Posterior cingulate gyrus (tissue), 11 donors: ENCODE measurements at regions of chr1 and their contacts with region 1.

Region 1: DNA sequence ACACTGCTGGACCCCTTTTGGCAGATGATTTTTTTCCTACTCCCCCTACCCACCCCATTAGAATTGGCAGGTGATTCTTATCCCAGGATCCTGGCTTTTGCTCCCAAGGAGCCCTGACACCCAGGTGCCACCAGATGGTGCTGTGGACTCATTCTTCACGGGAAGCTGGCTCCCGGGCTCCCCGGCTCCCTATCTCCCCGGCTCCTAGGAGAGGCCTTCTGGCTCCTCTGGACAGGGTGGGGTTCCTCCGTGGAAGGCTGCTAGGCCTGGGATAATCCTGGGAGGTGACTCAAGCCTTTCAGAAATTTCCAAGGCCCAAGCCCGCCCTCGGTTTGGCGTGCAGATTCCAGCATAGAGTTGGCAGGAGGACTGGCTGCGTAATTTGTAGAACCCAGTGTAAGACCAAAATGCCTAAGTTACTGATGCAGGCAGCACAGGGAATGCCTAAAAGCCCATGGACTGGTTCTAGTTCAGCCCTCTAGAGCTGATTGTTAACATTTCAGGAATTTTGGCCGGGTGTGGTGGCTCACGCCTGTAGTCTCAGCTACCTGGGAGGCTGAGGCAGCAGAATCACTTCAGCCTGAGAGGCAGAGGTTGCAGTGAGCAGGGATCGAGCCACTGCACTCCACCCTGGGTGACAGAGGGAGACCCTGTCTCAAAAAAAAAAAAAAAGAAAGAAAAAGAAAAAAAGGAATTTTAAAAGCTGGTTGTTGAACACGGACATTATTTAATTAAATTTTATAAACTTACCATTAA is 6.8 kb upstream of the BSDC1 start:
- DNase-seq: peak; percentile 73 to 98 (median 86)

Region 2: GRCh38 chr1:32250893-32251716 is 149.9 kb before region 1 on chr1 and contains the start of gene LCK:
- intact Hi-C with region 1: no loop called
- DNase-seq: no peak

Region 3: GRCh38 chr1:32361674-32362473 is 39.2 kb before region 1 on chr1:
- intact Hi-C with region 1: no loop called
- DNase-seq: peak; percentile 53 to 96 (median 74)

Region 4: DNA sequence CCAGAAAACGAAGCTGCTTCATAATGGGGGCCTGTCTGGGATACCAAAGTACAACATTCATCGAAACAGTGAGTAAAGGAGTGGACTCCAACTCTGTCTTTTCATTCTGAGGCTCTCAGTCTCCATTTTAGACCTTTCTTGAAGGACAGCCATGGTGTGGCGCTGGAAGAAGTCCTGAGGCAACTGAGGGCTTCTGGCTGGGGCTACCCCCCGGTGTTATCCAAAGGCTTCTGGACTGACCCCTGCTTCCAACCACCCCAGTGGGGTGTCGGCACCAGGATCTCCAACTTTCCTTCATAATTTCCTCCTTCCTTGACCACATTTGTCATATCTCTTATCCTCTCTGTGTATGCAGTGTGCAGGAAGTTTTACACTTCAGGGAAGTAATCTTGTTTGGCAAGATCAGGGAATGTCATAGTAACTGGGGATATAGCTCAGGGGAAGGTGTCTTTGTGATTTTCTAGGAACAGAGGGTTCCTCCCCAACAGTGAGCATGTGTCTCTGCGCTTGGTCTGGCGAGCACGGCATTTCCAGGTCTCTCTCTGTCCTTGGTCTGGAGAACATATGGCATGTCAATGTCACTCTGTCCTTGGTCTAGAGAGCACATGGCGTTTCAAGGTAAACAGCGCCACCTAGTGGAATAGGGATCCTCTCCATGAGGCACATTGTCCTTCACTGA is 12.6 kb after region 1 on chr1:
- intact Hi-C with region 1: loop called (anchors 1 kb)
- DNase-seq: peak in 4 of 10 donors; percentile 16 to 67 (median 35)

Region 5: DNA sequence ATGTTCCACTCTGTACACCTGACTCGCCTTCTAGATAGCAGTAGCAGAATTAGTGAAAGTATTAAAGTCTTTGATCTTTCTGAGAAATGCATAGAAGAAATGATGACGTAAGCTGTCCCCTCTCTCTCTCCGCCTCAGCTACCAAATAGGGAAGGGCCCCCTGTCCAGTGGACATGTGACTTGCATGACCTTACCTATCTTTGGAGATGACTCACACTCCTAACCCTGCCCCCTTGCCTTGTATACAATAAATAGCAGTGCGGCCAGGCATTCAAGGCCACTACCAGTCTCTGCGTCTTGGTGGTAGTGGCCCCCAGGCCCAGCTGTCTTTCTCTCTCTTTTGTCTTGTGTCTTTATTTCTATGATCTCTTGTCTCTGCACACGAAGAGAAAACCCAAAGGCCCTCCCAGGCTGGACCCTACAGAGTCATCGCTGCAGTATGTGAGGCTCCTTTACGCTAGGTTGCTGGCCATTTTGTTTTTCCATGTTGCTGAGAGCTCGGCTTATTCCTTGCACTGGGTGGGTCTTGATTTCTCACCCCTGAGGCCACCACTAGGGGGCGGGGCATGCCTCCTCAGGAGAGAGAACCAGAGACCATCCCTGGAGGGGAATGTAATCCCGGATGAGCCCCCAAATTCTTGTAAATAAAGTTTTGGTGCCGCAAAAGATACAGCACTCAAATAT is 47.9 kb after region 1 on chr1:
- intact Hi-C with region 1: no loop called
- DNase-seq: no peak